ENCODE measurements at regions of chr1 and their contacts with region 1.

Region 1: DNA sequence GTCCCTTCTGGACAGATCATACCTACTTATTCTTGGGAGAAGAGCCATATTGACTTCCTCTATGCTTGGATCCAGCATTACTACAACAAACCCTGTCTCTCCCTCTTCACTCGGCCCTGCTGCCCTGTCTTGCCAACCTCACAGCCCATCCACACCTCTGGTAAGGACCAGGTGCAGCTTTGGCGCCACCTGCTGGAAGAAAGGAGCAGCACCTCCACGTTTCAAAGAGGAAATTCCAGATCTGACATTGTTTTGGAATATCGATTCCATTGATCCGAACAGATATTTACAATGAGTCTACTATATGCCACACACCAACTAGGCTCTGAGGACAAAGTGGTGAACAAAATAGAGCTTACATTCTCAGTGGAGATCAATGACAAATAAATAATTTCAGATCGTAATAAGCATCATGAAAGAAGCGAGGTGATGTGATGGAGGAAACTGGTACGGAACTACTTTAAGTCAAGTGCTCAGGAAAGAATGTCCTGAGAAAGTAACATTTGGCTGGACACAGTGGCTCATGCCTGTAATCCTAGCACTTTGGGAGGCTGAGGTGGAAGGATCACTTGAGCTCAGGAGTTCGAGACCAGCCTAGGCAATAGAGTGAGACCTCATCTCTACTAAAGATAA is 18.7 kb downstream of the MFSD2A start:
- DNase-seq: peak; percentile 83
- CTCF ChIP-seq: peak; percentile 92

Region 2: DNA sequence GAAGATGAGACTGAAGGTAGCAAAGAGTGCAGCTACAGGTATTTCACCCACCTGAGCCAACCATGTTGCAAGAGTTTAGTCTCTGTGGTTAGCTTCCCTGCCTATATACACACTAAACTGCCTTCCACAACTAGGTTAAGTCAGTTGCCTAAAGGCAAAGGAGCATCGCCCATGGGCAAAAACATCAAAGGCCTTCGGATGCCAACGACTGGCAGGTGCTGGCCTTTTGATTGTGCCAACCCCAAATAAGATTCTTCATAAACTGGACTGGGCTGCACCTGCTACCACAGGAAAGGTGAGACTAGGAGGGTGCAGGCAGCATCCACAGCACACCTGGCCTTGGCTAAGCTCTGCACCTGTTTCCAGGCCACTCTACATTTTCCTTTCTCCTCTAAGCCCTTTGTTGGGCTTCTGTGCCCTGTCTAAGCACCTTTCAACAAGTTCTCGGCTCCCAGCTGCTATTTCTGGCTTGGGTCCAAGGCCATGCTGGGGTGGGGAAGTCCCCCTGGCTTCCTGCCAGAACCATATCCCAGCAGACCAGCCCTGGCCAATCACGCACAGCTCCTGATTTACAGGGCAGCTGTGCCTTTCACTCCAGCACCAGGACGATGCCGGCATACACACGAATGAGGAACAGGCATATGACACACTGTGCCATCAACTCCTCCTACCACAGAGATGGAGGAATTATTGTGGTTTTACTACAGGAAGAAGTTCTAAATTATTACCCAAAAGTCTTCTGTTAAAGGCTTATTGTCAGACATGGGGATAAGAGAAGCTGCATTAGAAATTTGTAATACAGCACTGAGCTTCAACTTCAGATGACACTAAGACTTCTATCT is 128.1 kb before region 1 on chr1:
- CTCF ChIA-PET with region 1: interaction called, 12 read pairs
- POLR2A ChIA-PET with region 1: interaction called, 3 read pairs
- DNase-seq: peak; percentile 45
- CTCF ChIP-seq: no peak

Region 3: GRCh38 chr1:39866767-39867166 is 106.9 kb before region 1 on chr1:
- CTCF ChIA-PET with region 1: no interaction called
- POLR2A ChIA-PET with region 1: no interaction called
- DNase-seq: no peak
- CTCF ChIP-seq: no peak

Region 4: GRCh38 chr1:39907528-39908453 is 65.8 kb before region 1 on chr1:
- CTCF ChIA-PET with region 1: interaction called, 25 read pairs
- POLR2A ChIA-PET with region 1: no interaction called
- DNase-seq: no peak
- CTCF ChIP-seq: no peak

Region 5: DNA sequence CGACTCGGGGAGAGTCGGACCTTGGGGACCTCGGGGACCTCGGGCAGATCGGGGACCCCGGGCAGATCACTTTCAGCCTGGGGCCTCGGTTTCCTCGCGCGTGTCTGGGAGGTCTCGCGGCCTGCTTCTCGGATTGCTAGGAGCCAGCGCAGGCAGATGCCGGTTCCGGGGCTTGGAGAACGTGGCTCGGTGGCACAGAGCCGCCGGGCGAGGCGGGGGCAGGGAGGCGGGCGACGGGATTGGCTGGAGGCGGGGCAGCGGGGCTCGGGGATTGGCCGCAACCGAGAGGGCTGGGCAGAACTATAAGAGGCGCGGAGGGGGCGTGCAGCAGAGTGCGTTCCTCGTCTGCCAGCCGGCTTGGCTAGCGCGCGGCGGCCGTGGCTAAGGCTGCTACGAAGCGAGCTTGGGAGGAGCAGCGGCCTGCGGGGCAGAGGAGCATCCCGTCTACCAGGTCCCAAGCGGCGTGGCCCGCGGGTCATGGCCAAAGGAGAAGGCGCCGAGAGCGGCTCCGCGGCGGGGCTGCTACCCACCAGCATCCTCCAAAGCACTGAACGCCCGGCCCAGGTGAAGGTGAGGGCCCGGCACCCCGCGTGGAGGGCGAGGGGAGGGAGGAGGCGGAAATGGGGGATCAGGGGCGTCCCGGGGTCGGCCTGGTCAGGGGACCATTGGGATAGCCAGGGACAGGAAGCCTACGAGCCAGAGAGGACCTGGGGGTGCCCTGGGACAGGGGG is 18.6 kb before region 1 on chr1 and contains the start of gene MFSD2A:
- CTCF ChIA-PET with region 1: interaction called, 113 read pairs
- POLR2A ChIA-PET with region 1: no interaction called
- DNase-seq: peak; percentile 93
- CTCF ChIP-seq: no peak

Region 6: DNA sequence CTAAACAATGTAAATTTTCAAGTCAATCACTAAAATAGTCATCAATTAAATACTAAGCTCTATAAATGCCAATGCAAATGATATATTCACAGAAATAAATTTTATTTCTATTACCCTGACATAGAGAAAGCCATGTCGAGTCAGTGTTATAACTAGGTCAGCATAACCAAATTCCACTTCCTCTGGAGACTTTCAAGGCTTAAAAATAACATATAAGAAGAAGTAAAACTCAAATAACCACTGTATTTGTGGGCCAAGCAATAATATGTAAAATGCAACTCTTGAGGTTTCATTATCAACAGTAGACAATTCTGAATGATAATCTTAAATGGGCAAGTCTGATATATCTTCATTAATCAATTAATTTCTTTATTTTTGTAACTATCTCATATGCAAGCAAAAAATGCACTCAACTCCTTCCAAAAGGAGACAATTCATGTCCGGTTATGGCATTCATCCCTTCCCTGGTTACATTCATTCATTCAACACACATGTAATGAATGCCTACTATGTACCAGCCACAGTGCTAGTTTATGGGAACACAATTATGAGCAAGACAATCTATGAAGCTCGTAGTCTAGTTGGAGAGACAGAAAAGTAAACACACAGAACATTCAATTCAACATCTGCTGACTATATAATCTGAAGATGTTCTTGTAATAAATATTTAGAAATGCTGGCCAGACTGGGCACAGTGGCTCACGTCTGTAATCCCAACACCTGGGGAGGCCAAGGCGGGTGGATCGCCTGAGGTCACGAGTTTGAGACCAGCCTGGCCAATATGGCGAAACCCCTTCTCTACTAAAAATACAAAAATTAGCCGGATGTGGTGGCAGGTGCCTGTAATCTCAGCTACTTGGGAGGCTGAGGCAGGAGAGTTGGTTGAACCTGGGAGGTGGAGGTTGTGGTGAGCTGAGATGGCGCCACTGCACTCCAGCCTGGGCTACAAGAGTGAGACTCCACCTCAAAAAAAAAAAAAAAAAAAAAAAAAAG is 29.8 kb after region 1 on chr1:
- CTCF ChIA-PET with region 1: interaction called, 11 read pairs
- POLR2A ChIA-PET with region 1: no interaction called
- DNase-seq: peak; percentile 61
- CTCF ChIP-seq: no peak

Region 7: DNA sequence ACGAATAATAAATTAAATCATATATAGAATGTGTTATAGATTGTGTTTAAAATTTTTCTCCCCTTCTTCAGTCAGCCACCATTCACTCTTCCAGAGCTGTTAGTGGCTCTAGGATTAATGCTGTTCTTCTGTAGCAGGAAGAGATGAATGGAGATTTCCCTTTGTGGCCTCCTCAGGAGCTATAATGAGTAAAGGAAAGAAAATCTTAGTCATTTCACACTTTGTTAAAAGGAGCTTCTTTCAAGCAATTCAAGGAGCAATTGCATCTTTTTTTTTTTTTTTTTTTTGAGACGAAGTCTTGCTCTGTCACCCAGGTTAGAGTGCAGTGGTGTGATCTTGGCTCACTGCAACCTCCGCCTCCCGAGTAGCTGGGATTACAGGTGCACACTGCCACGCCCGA is 250.4 kb after region 1 on chr1:
- CTCF ChIA-PET with region 1: no interaction called
- POLR2A ChIA-PET with region 1: no interaction called
- DNase-seq: no peak
- CTCF ChIP-seq: no peak

Measured in GM10248 (cell line).